WTC11 (cell line): ENCODE measurements at regions of chr5 and their contacts with region 1.

Region 1: GRCh38 chr5:142222866-142223558 is 101.8 kb downstream of the SPRY4 start:
- DNase-seq: no peak
- ATAC-seq: peak; percentile 28
- H3K4me3 Mint-ChIP-seq: no peak overlapping the region
- H3K27ac Mint-ChIP-seq: no peak overlapping the region
- H3K4me1 Mint-ChIP-seq: peaks cover 54% of the 10 kb centered on the region
- H3K27me3 Mint-ChIP-seq: no peaks in the 10 kb centered on the region; the same call in 1 of the 2 replicates
- CTCF ChIP-seq: no peak

Region 2: GRCh38 chr5:142210864-142211412 is 12.1 kb before region 1 on chr5:
- CTCF ChIA-PET with region 1: interaction called, 10 read pairs
- POLR2A ChIA-PET with region 1: no interaction called
- DNase-seq: no peak
- ATAC-seq: no peak
- H3K4me3 Mint-ChIP-seq: no peak overlapping the region
- H3K27ac Mint-ChIP-seq: no peak overlapping the region
- H3K4me1 Mint-ChIP-seq: peaks cover 31% of the 10 kb centered on the region
- H3K27me3 Mint-ChIP-seq: no peaks in the 10 kb centered on the region
- CTCF ChIP-seq: no peak

Region 3: GRCh38 chr5:142235055-142235797 is 12.2 kb after region 1 on chr5:
- CTCF ChIA-PET with region 1: interaction called, 20 read pairs
- POLR2A ChIA-PET with region 1: no interaction called
- DNase-seq: peak; percentile 78
- ATAC-seq: peak; percentile 90
- H3K4me3 Mint-ChIP-seq: 0 out of 2 replicates have a peak overlapping the region, but pooled peaks have one; percentile 17
- H3K27ac Mint-ChIP-seq: peak overlapping the region; percentile 97
- H3K4me1 Mint-ChIP-seq: peaks cover 52% of the 10 kb centered on the region
- H3K27me3 Mint-ChIP-seq: no peaks in the 10 kb centered on the region; the same call in 1 of the 2 replicates
- CTCF ChIP-seq: no peak

Region 4: DNA sequence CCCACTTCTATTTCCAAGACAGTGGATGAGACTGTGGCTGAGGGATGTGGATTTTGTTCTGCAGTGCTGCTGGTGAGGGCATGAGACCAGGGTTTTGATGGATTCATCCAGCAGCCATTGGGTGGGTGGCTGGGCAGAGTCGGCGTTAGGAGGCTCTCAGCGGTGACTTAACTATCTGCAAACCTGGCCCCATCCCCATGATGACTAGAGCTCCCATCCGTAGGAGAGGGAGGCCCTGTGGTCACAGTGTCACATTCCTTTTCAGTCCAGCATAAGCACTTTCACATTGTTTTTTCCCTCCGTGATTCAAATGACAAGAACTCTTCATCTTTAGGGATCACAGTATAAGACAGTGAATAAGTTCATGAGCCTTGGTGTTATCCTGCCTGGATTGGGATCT is 162.2 kb after region 1 on chr5:
- CTCF ChIA-PET with region 1: no interaction called
- POLR2A ChIA-PET with region 1: no interaction called
- DNase-seq: no peak
- ATAC-seq: no peak
- H3K4me3 Mint-ChIP-seq: no peak overlapping the region
- H3K27ac Mint-ChIP-seq: no peak overlapping the region
- H3K4me1 Mint-ChIP-seq: peaks cover 40% of the 10 kb centered on the region
- H3K27me3 Mint-ChIP-seq: peaks cover 2% of the 10 kb centered on the region; the same call in 1 of the 2 replicates
- CTCF ChIP-seq: no peak

Region 5: DNA sequence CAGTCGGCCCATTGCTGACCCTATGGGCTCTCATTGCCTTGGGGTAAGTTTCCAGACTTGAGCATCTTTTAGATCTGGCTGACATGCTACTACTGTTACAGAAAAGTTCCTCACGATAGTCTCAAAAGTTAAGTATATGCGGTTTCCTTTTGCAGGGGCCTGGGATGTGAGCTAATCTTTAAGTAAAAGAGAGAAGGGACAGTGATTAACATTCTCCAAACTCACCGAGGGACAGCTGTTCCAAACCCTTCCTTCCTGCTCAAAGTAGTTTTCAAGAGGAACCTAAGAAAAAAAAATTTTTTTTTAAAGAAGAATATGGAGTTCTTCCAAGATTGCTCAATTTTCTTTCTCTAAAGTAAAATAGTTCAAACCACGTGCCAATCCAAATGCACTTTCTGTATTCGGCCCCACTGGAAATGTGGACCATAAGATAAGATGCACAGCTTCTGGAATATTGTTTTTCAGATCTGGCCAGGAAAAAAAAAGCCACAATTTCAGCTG is 269.8 kb after region 1 on chr5:
- CTCF ChIA-PET with region 1: no interaction called
- POLR2A ChIA-PET with region 1: no interaction called
- DNase-seq: no peak
- ATAC-seq: no peak
- H3K4me3 Mint-ChIP-seq: no peak overlapping the region
- H3K27ac Mint-ChIP-seq: peak overlapping the region; percentile 31; the same call in 1 of the 2 replicates
- H3K4me1 Mint-ChIP-seq: peaks cover 26% of the 10 kb centered on the region
- H3K27me3 Mint-ChIP-seq: no peaks in the 10 kb centered on the region
- CTCF ChIP-seq: no peak